PC-3 (cell line): ENCODE measurements at regions of chr14 and their contacts with region 1.

Region 1: GRCh38 chr14:50045039-50045711 is 71.2 kb downstream of the VCPKMT start:
- DNase-seq: peak; percentile 97
- ATAC-seq: peak; percentile 89
- H3K4me3 ChIP-seq: no peak overlapping the region
- H3K27ac ChIP-seq: peak overlapping the region; percentile 97
- H3K4me1 ChIP-seq: peaks cover 59% of the 10 kb centered on the region
- H3K27me3 ChIP-seq: no peaks in the 10 kb centered on the region
- CTCF ChIP-seq: peak; percentile 31; the same call in 1 of the 2 replicates

Region 2: DNA sequence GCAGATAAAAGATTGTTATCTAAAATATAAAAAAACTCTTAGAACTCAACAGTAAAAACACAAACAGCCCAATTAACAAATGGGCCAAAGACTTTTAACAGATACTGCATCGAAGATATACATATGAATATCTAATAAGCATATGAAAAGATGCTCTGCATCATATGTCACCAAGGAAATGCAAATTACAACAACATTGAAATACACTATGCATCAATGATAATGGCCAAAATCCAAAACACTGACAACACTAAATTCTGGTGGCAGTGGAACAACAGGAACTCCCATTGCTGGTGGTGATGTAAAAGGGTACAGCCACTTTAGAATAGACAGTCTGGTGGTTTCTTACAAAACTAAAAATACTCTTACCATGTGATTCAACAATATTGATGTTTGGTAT is 236.4 kb before region 1 on chr14:
- CTCF ChIA-PET with region 1: no interaction called
- POLR2A ChIA-PET with region 1: interaction called, 14 read pairs
- intact Hi-C with region 1: no loop called
- DNase-seq: no peak
- ATAC-seq: no peak
- H3K4me3 ChIP-seq: no peak overlapping the region
- H3K27ac ChIP-seq: no peak overlapping the region
- H3K4me1 ChIP-seq: no peaks in the 10 kb centered on the region
- H3K27me3 ChIP-seq: no peaks in the 10 kb centered on the region
- CTCF ChIP-seq: no peak

Region 3: DNA sequence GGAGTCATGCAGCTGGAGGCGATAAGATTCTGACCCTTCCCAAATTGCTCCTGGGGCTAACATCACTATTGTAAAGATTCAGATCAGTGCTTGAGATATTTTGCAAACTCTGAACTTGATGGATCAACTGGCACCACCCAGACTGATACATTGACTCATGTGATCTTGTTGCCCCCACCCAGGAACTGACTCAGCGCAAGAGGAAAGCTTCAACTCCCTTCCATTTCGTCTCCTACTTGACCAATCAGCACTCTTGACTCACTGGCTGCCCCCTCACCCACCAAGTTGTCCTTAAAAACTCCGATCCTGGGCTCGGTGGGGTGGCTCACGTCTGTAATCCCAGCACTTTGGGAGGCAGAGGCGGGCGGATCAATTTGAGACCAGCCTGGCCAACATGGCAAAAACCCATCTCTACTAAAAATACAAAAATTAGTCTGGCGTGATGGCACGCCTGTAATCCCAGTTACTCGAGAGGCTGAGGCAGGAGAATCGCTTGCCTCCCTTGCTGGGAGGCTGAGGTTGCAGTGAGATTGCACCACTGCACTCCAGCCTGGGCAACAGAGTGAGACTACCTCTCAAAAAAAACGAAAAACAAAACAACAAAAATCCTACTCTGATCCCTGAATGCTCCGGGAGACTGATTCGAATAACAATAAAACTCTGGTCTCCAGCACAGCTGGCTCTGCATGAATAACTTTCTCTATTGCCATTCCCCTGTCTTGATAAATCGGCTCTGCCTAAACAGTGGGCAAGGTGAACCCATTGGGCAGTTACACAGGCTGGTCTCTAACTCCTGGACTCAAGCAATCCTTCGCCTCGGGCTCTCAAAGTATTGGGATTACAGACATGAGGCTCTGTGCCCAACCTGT is 162.1 kb before region 1 on chr14:
- CTCF ChIA-PET with region 1: no interaction called
- POLR2A ChIA-PET with region 1: no interaction called
- intact Hi-C with region 1: no loop called
- DNase-seq: peak; percentile 47
- ATAC-seq: no peak
- H3K4me3 ChIP-seq: no peak overlapping the region
- H3K27ac ChIP-seq: 0 out of 2 replicates have a peak overlapping the region, but pooled peaks have one; percentile 12
- H3K4me1 ChIP-seq: peaks cover 10% of the 10 kb centered on the region; the same call in 1 of the 2 replicates
- H3K27me3 ChIP-seq: no peaks in the 10 kb centered on the region
- CTCF ChIP-seq: no peak

Region 4: DNA sequence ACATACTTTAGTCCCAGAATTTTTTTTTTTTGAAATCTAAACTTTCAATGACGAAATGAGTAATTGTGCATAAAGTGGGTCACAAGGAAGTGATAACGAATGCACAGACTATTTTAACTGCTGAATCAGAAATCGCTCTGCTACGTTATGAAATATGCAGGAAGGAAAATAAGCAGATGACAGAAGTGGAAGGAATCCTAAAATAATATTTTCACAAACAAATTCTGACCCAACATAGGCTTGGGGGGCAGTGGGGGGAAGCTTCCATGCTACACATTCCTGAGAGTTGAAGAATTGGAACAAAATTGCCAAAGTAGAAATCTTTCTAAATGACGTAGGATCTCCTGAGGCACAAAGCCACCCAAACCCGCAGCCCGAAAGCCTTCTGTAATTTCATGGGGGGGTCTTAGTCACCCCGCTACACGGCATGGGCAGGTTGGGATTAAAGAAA is 62.6 kb before region 1 on chr14:
- CTCF ChIA-PET with region 1: no interaction called
- POLR2A ChIA-PET with region 1: no interaction called
- intact Hi-C with region 1: no loop called
- DNase-seq: no peak
- ATAC-seq: no peak
- H3K4me3 ChIP-seq: no peak overlapping the region
- H3K27ac ChIP-seq: no peak overlapping the region
- H3K4me1 ChIP-seq: peaks cover 12% of the 10 kb centered on the region
- H3K27me3 ChIP-seq: no peaks in the 10 kb centered on the region
- CTCF ChIP-seq: no peak

Region 5: GRCh38 chr14:49992901-49993335 is 52.3 kb before region 1 on chr14:
- CTCF ChIA-PET with region 1: no interaction called
- POLR2A ChIA-PET with region 1: no interaction called
- intact Hi-C with region 1: no loop called
- DNase-seq: peak; percentile 57
- ATAC-seq: peak; percentile 70
- H3K4me3 ChIP-seq: no peak overlapping the region
- H3K27ac ChIP-seq: no peak overlapping the region
- H3K4me1 ChIP-seq: peaks cover 8% of the 10 kb centered on the region
- H3K27me3 ChIP-seq: no peaks in the 10 kb centered on the region
- CTCF ChIP-seq: no peak

Region 6: DNA sequence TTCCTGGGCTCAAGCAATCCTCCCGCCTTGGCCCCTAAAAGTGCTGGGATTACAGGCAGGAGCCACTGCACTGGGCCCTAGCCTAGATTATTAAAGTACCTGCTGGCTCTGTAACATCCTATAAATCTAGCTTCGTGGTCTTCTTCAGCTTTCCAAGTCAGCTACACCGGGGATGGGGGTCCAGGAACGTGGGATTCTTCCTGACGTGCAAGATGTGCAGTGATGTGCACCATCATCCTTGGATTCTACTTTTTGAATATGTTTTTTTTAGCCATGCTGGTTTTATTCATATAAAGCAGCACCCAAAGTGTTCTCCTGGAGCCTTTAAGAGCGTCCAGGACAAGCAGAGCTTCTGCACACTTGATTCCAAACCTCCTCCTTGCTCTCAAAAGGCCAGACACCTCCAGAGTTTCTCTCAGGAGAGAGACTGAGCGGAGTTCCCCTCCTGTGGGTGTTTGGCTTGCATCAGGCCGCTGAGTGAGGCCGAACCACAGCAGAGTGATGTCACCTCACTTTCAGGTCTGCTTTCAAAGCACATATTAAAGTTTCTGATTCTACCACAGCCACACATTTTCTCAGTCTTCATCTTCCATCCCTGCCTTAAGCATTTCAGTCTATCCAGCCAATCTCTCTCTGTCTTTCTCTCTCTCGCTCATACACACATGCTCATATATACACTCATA is 37.8 kb after region 1 on chr14:
- CTCF ChIA-PET with region 1: no interaction called
- POLR2A ChIA-PET with region 1: no interaction called
- intact Hi-C with region 1: no loop called
- DNase-seq: no peak
- ATAC-seq: no peak
- H3K4me3 ChIP-seq: no peak overlapping the region
- H3K27ac ChIP-seq: no peak overlapping the region
- H3K4me1 ChIP-seq: 0 out of 2 replicates have a peak, but pooled peaks cover 4% of the 10 kb centered on the region
- H3K27me3 ChIP-seq: no peaks in the 10 kb centered on the region
- CTCF ChIP-seq: no peak

Region 7: DNA sequence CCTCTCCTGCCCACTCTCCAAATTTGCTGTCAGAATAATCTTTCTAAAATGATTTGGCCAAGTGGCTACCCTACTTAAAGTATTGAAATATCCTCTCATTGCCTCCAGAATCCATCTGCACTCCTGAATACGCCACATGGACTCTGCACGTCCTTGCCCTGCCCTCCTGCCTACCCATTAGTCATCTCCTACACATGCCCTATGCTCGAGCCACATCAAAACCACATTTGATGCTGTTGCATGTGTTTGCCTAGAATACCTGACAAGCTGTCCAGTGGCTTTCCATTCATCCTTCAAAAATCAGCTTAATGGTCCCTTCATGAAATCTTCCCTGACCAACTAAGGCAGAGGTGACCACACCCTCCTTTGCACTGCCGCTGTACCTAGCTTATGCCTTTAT is 54.2 kb after region 1 on chr14:
- CTCF ChIA-PET with region 1: no interaction called
- POLR2A ChIA-PET with region 1: interaction called, 10 read pairs
- intact Hi-C with region 1: loop called (anchors 2 kb)
- DNase-seq: peak; percentile 93
- ATAC-seq: peak; percentile 99
- H3K4me3 ChIP-seq: no peak overlapping the region
- H3K27ac ChIP-seq: peak overlapping the region; percentile 66
- H3K4me1 ChIP-seq: peaks cover 38% of the 10 kb centered on the region
- H3K27me3 ChIP-seq: no peaks in the 10 kb centered on the region
- CTCF ChIP-seq: no peak

Region 8: GRCh38 chr14:50109342-50109741 is 64.2 kb after region 1 on chr14:
- CTCF ChIA-PET with region 1: no interaction called
- POLR2A ChIA-PET with region 1: interaction called, 3 read pairs
- intact Hi-C with region 1: loop called (anchors 2 kb)
- DNase-seq: peak; percentile 38
- ATAC-seq: peak; percentile 16; the same call in 1 of the 2 replicates
- H3K4me3 ChIP-seq: no peak overlapping the region
- H3K27ac ChIP-seq: no peak overlapping the region
- H3K4me1 ChIP-seq: peaks cover 10% of the 10 kb centered on the region
- H3K27me3 ChIP-seq: no peaks in the 10 kb centered on the region
- CTCF ChIP-seq: peak; percentile 62